ENCODE measurements at regions of chr1 and their contacts with region 1.

Region 1: DNA sequence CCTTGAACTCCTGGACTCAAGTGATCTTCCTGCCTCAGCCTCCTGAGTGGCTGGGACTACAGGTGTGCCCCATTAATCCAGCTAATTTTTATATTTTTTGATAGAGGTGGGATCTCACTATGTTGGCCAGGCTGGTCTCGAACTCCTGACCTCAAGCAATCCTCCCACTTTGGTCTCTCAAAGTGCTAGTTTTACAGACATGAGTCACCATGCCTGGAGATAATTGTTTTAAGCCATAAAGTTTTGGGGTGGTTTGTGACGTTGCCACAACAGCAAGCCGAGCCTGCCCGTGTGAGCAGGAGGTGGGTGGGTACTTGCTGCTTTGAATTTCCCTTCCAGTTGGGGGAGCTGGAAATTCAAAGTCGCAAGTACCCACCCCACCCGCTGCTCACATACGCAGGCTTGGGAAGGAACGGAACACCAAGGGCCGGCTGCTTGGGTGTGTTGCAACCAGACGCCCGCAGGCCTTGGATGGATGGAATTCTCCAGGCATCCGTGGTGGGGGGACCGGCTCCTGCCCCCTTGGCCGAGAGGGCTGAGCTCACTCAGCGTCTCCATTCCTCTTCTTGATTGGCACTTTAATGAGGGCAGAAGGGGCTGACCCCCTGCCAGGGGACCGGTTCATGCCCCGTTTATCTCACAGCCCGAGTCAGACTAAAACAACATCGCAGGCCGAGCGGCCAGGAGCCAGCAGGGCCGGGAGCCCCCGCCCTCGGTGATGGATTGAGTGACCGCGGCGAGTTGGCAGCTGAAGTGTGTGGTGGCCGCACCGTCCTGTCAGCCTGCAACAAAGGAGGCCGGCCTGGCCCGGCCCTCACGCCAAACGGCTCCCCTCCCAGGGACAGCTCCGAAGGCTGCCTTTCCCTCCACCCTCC is 78.1 kb downstream of the DHRS3 start:
- DNase-seq: peak; percentile 93 to 97
- H3K4me3 ChIP-seq: peak overlapping the region; percentile 4 to 26
- H3K27ac ChIP-seq: peak overlapping the region; percentile 79 to 80
- H3K4me1 ChIP-seq: peaks cover 0 to 41% (median 28%) of the 10 kb centered on the region in 4 donors
- H3K27me3 ChIP-seq: no peaks in the 10 kb centered on the region
- CTCF ChIP-seq: peak; percentile 14 to 30

Region 2: GRCh38 chr1:12047120-12047876 is 492.6 kb before region 1 on chr1:
- intact Hi-C with region 1: no loop called
- DNase-seq: no peak
- H3K4me3 ChIP-seq: no peak overlapping the region
- H3K27ac ChIP-seq: no peak overlapping the region
- H3K4me1 ChIP-seq: peaks cover 0 to 7% (median 6%) of the 10 kb centered on the region in 4 donors
- H3K27me3 ChIP-seq: peaks cover 0 to 13% of the 10 kb centered on the region in 2 donors
- CTCF ChIP-seq: no peak

Region 3: GRCh38 chr1:12594966-12595756 is 55.2 kb after region 1 on chr1:
- intact Hi-C with region 1: loop called (anchors 2 kb)
- DNase-seq: peak; percentile 79 to 94
- H3K4me3 ChIP-seq: peak overlapping the region; percentile 45 to 51
- H3K27ac ChIP-seq: peak overlapping the region; percentile 90 to 91
- H3K4me1 ChIP-seq: peaks cover 0 to 97% (median 79%) of the 10 kb centered on the region in 4 donors
- H3K27me3 ChIP-seq: no peaks in the 10 kb centered on the region
- CTCF ChIP-seq: no peak